HepG2 (cell line): ENCODE measurements at regions of chr2 and their contacts with region 1.

Region 1: DNA sequence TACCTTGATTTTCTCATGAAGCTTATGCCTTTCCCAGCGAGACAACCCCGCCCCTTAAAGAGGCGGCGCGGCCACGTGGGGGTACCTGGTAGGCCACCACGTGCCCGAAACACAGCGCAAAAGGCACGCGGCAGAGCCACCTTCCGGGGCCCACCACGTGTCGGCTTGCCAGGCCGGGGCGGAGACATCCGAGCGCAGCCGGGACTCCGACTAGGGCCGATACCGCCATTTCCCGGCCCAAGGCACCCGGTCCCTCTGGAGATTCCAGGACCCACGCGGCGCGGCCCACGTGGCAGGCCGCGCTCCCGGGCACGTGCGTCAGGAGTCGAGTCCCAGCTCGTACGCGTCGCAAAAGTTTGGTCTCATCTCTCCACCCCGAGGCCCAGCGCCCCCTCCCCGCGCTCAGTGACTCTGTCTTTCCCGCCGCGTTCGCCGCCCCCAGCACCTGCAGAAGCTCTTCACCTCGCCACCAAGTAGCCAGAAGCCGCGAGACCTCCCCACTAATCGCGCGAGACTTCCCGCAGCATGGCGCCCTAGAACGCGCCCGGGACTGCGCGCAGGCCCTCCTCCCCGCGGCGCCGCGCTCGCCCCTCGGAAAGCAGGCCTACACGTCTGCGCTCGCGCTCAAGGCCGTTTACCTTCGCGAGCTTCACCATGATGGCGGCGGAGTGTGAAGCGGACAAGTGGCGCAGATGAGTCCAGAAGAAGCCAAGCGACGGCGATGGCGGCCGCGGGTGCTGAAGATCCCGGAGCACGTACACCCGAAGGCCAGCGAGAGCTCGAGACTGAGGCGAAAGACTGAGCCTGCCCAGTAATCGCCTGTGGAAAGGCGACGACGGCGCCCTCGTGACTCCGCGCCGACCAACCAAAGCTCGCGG is at the start of gene NCL:
- DNase-seq: peak; percentile 96
- ATAC-seq: peak; percentile 94
- H3K4me3 ChIP-seq: peak within 1 kb of the TSS; percentile 80 to 100 (median 87)
- H3K27ac ChIP-seq: peak within 1 kb of the TSS; percentile 99
- H3K4me1 ChIP-seq: peaks cover 61% of the 10 kb centered on the region
- H3K27me3 ChIP-seq: peaks cover 0 to 2% of the 10 kb centered on the region in 2 experiments; a peak in 3 of 5 replicates
- CTCF ChIP-seq: peak; percentile 35; the same call in 1 of the 2 replicates
- EP300 ChIP-seq: peak; percentile 18 to 53; a peak in 2 of 4 replicates
- POLR2A ChIP-seq: peak; percentile 100
- RAD21 ChIP-seq: peak; percentile 65
- total RNA-seq, gene NCL: 779 and 1,144 TPM in 2 replicates

Region 2: DNA sequence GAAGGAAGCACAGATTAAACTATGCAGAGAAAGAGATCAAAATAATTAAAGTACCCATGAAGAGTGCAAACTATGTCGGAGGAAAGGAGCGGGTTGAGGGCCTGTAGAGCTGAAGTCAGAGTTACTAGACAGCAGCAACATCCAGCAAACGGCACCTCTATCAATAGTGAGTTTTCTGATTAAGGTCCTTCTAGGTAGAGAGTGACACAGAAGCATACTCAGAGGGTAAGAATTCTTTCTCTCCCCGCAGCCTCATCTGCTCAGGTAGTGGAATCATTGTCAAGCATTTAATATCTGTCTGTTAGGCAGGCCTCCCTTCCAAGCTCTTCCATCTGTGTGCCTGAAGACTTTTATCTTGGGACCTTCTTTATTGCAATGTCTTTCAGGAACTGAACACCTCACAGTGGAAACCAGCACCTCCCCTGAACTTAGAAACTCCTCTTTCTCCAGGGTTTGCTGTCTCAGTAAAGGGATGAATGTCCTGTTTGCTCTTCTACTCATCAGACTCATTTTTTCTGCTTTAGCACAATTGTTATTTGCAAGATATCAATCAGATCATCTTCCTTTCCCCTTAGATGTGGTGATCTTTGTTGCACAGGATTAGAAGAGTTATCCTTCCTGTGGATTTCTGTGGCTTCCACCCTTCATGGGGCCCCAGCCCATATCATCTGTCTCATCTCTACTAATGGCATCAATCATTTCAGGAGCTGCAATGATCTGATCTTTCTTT is 1209.6 kb before region 1 on chr2:
- CTCF ChIA-PET with region 1: no interaction called
- POLR2A ChIA-PET with region 1: no interaction called
- in situ Hi-C with region 1: no loop called
- intact Hi-C with region 1: no loop called
- DNase-seq: no peak
- ATAC-seq: no peak
- H3K4me3 ChIP-seq: no peak overlapping the region
- H3K27ac ChIP-seq: no peak overlapping the region
- H3K4me1 ChIP-seq: no peaks in the 10 kb centered on the region
- H3K27me3 ChIP-seq: peaks cover 0 to 13% of the 10 kb centered on the region in 2 experiments; a peak in 1 of 5 replicates
- CTCF ChIP-seq: no peak
- EP300 ChIP-seq: no peak
- POLR2A ChIP-seq: no peak
- RAD21 ChIP-seq: no peak

Region 3: DNA sequence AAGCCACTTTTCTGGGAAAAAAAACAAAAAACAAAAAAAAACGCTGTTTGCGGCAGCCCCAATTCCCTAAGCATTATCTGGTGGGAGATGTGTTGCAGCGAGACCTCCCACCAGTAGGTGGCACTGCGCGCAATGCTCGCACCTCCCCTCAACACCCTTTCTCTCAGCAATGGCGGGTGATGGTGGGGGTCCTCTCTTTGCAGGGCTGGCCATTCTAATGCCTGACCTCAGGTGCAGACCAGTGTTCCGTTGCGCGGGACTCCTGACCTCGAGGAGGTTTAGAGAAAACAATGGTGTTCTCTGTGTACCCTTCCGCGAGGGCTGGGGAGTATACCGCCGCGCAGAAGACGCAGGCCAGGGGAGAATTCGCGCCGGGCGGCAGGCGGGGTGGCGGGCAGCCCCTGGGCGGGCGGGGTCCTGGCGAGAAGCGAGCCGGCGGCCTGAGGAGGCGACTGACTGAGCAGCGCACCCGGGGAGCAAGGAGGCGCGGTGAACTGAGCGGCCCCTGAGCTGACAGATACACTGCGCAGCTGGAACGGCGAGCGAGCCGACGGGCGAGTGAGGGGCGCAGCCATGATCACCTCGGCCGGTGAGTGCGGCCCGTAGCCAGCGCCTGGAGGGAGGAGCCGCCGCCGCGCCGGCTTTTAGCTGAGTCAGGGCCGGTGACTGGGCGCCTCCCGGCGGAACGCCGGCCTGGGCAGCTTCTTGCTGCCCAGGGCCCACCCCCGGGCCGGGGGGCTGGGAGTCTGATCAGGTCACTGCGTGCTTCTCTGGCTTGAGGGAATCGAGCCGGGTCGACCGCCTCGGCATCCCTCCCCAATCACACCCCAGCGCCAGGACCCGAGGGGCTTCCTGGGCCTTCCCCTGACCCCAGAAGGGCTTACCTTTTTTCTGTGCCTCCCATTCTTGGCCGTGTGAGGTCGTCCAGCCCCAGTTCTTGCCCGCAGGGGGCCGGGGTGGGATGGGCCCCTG is 407.2 kb before region 1 on chr2 and contains the start of gene PSMD1:
- CTCF ChIA-PET with region 1: no interaction called
- POLR2A ChIA-PET with region 1: interaction called, 14 read pairs
- in situ Hi-C with region 1: no loop called
- intact Hi-C with region 1: loop called (anchors 5 kb)
- DNase-seq: peak; percentile 91
- ATAC-seq: peak; percentile 71
- H3K4me3 ChIP-seq: peak within 1 kb of the TSS; percentile 83 to 99 (median 96)
- H3K27ac ChIP-seq: peak within 1 kb of the TSS; percentile 95
- H3K4me1 ChIP-seq: peaks cover 57% of the 10 kb centered on the region
- H3K27me3 ChIP-seq: no peaks in the 10 kb centered on the region; a peak in 1 of 5 replicates
- CTCF ChIP-seq: peak; percentile 95
- EP300 ChIP-seq: peak in 1 of 2 experiments; percentile 28; a peak in 1 of 4 replicates
- POLR2A ChIP-seq: peak in 1 of 2 experiments; percentile 86; a peak in 2 of 4 replicates
- RAD21 ChIP-seq: peak; percentile 62
- total RNA-seq, gene PSMD1: 191 and 287 TPM in 2 replicates

Region 4: DNA sequence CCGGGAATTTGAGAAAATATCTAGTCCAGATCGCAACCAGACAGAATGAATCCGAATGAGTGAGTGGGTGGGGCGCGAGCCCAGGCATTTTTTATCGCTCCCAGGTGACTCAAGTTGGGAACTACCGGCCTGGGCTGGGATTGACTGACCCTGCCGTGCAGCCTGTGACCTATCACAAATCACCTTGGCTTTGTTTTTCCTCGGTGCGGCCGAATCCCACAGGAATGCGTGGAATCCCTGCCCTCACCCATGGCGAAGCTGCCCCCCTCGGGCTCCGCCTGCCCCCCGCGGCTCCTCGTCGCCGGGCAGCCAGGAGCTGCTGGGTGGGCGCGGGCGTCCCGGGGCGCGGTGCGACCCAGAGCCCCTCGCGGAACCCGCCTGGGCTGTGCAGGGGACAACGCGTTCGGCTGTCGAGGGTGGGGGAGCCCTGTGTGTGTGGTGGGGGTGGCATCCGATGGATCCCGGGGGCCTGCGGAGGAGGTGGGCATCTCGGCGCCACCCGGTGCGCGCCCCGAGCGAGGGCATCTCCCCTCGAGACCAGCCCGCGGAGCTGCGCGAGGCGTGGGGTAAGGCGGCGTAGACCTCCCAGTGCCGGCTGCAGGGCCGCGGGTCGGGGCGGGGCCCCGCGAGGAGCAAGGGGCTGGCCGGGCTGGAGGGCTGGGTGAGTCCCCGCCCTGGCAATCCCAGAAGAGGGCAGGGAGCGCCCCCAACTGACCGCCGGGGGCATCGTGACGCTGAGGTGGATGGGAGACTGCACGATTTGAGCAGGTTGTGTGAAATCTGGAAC is 51.9 kb before region 1 on chr2:
- CTCF ChIA-PET with region 1: no interaction called
- POLR2A ChIA-PET with region 1: interaction called, 18 read pairs
- in situ Hi-C with region 1: no loop called
- intact Hi-C with region 1: no loop called
- DNase-seq: peak; percentile 79
- ATAC-seq: peak; percentile 96
- H3K4me3 ChIP-seq: peak overlapping the region; percentile 64 to 79 (median 75)
- H3K27ac ChIP-seq: no peak overlapping the region
- H3K4me1 ChIP-seq: peaks cover 40% of the 10 kb centered on the region
- H3K27me3 ChIP-seq: peaks cover 0 to 8% of the 10 kb centered on the region in 2 experiments; a peak in 3 of 5 replicates
- CTCF ChIP-seq: peak; percentile 98
- EP300 ChIP-seq: no peak
- POLR2A ChIP-seq: peak in 1 of 2 experiments; percentile 20; a peak in 1 of 4 replicates
- RAD21 ChIP-seq: peak; percentile 96

Region 5: DNA sequence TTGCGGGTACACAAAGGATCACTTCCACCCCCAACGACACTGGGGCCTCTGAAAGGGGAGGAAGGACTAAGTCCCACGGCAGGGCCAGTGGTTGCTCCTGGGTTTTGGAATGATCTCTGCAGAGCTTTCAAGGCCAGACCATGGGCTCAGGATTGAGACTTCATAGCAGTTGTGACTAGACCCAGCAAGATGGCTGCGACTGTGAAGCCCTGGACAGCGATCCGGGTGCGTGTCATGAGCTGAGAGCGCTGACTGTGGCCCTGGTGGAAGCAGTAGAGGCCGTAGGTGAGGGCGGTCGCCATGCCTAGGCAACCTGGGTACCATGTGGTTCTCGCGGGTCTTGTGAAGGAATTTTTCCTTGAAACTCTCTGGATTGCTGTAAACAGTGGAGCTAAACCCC is 27.0 kb before region 1 on chr2:
- CTCF ChIA-PET with region 1: no interaction called
- POLR2A ChIA-PET with region 1: interaction called, 11 read pairs
- in situ Hi-C with region 1: no loop called
- intact Hi-C with region 1: no loop called
- DNase-seq: no peak
- ATAC-seq: no peak
- H3K4me3 ChIP-seq: no peak overlapping the region
- H3K27ac ChIP-seq: no peak overlapping the region
- H3K4me1 ChIP-seq: no peaks in the 10 kb centered on the region
- H3K27me3 ChIP-seq: no peaks in the 10 kb centered on the region; a peak in 2 of 5 replicates
- CTCF ChIP-seq: no peak
- EP300 ChIP-seq: no peak
- POLR2A ChIP-seq: no peak
- RAD21 ChIP-seq: no peak

Region 6: DNA sequence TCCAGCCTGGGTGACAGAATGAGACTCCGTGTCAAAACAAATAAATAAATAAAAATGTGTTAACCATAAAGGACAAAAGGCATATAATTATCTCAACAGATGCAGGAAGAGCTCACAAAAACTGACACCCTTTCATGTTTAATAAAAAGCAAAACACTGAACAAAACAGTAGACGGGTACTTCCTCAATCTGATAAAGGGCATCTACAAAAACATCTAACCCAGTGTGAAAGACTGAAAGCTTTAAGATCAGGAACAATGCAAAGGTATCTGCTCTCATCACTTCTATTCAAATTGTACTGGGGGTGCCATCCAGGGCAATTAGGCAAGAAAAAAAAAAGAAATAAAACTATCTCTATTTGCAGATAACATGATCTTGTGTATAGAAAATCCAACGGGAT is 12.0 kb after region 1 on chr2:
- CTCF ChIA-PET with region 1: no interaction called
- POLR2A ChIA-PET with region 1: interaction called, 21 read pairs
- in situ Hi-C with region 1: no loop called
- intact Hi-C with region 1: no loop called
- DNase-seq: no peak
- ATAC-seq: no peak
- H3K4me3 ChIP-seq: no peak overlapping the region
- H3K27ac ChIP-seq: no peak overlapping the region
- H3K4me1 ChIP-seq: no peaks in the 10 kb centered on the region
- H3K27me3 ChIP-seq: peaks cover 2 to 21% of the 10 kb centered on the region in 2 experiments; a peak in 2 of 5 replicates
- CTCF ChIP-seq: no peak
- EP300 ChIP-seq: no peak
- POLR2A ChIP-seq: no peak
- RAD21 ChIP-seq: no peak

Region 7: DNA sequence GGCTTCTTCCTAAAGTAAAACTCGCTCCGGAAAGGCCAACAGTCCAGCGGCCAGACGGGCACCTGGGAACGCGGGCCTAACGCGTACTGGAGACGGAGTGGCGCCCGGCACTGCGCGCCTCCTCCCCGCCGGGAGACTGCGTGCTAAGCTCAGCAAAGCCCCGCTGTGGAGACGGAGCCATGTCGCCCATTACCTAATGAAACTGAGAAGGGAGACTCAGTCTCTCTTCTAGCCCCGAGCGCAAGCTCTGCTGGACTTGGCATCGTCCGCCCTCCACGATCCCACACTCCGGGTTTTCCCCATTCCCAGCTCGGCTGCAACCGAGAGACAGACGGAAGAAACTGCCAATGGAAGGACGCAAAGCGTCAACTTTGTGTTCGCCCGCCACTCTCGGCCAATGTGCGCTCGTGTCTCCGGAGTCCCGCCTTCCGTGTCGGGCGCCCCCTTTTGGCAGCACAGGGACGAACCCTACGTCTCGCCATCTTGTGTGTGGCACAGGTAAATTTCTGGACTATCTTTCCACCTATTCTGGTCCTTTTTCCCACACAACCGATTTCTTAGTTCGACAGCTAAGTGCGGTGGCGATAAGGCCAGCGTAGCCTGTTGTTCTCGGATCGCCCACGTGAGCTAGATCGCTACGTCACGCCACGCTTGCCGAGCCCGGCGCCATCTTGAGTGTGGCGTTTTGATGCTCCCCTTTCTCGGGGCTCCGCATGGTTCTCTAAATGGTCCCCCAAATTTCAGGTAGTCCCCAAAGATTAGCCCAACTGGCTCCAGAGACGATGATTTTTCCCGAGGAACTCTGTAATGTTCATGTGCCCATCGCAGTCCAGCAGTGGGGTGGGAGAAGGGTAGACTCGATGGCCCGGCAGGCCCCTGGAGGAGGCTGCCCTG is 243.0 kb after region 1 on chr2:
- CTCF ChIA-PET with region 1: no interaction called
- POLR2A ChIA-PET with region 1: interaction called, 13 read pairs
- in situ Hi-C with region 1: no loop called
- intact Hi-C with region 1: loop called (anchors 5 kb)
- DNase-seq: peak; percentile 95
- ATAC-seq: peak; percentile 35
- H3K4me3 ChIP-seq: peak overlapping the region; percentile 58 to 83 (median 75)
- H3K27ac ChIP-seq: peak overlapping the region; percentile 87
- H3K4me1 ChIP-seq: peaks cover 55% of the 10 kb centered on the region
- H3K27me3 ChIP-seq: no peaks in the 10 kb centered on the region
- CTCF ChIP-seq: peak; percentile 98
- EP300 ChIP-seq: peak in 1 of 2 experiments; percentile 16; a peak in 1 of 4 replicates
- POLR2A ChIP-seq: peak in 1 of 2 experiments; percentile 79; a peak in 2 of 4 replicates
- RAD21 ChIP-seq: no peak

Region 8: GRCh38 chr2:232008907-232009638 is 545.1 kb after region 1 on chr2:
- CTCF ChIA-PET with region 1: no interaction called
- POLR2A ChIA-PET with region 1: no interaction called
- in situ Hi-C with region 1: no loop called
- intact Hi-C with region 1: no loop called
- DNase-seq: no peak
- ATAC-seq: no peak
- H3K4me3 ChIP-seq: no peak overlapping the region
- H3K27ac ChIP-seq: no peak overlapping the region
- H3K4me1 ChIP-seq: 0 out of 2 replicates have a peak, but pooled peaks cover 10% of the 10 kb centered on the region
- H3K27me3 ChIP-seq: no peaks in the 10 kb centered on the region
- CTCF ChIP-seq: no peak
- EP300 ChIP-seq: no peak
- POLR2A ChIP-seq: no peak
- RAD21 ChIP-seq: no peak